T-cell (primary cell): ENCODE measurements at regions of chr2 and their contacts with region 1.

Region 1: DNA sequence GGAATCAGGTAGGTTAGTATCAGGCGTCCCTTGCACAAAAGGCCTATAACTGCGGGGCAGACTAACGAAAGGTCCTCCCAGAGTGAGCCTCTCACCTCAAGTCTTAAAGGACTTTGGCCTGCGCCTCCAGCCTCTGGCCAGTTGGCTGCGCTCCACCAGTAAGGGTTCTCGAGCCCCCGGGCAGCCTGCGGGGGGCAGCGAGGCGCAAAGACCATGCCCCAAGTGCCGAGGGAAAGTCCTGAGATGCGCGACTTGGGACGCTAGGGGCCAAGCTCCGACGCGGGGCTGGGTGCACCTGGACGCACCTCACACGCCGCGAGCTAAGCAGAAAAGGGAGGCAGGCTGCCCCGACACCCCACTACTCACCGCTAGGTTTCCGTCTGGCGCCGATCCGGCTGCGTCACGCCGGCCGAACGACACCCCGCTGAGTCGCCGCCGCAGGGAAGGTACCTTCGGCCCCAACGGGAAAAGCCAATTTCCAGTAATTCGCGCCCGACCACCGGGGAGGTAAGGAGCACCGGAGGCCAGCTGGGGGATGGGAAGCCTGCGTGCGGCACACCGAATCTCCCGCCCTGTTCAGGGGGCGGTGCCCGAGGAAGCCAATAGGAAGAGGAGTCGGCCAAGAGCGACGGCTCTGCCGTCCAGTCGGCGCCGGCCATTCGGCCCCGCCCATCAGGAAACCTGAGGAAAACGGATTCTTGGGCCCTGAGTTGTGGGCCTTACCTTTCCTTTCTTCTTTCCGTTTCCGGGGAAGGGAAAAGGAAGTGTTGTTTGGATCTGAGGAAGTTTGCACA is at the start of gene ORC2:
- DNase-seq: peak; percentile 78 to 95 (median 90)
- ATAC-seq: peak; percentile 95 to 97 (median 96)
- H3K4me3 ChIP-seq: peak within 1 kb of the TSS; percentile 72 to 92
- H3K4me3 Mint-ChIP-seq: peak within 1 kb of the TSS; percentile 97 to 99 (median 98)
- H3K27ac ChIP-seq: peak within 1 kb of the TSS; percentile 78
- H3K27ac Mint-ChIP-seq: peak within 1 kb of the TSS; percentile 98 to 100
- H3K4me1 ChIP-seq: peaks cover 19 to 21% of the 10 kb centered on the region in 2 experiments
- H3K4me1 Mint-ChIP-seq: peaks cover 70 to 74% (median 71%) of the 10 kb centered on the region in 3 donors
- H3K27me3 ChIP-seq: no peaks in the 10 kb centered on the region
- H3K27me3 Mint-ChIP-seq: no peaks in the 10 kb centered on the region
- total RNA-seq, gene ORC2: 29.9 to 52.4 (median 50.6) TPM

Region 2: GRCh38 chr2:200578778-200579177 is 384.5 kb before region 1 on chr2:
- CTCF ChIA-PET with region 1: no interaction called
- POLR2A ChIA-PET with region 1: no interaction called
- DNase-seq: peak in 1 of 35 experiments; percentile 41
- ATAC-seq: no peak
- H3K4me3 ChIP-seq: no peak overlapping the region
- H3K4me3 Mint-ChIP-seq: no peak overlapping the region
- H3K27ac ChIP-seq: no peak overlapping the region
- H3K27ac Mint-ChIP-seq: no peak overlapping the region
- H3K4me1 ChIP-seq: no peaks in the 10 kb centered on the region
- H3K4me1 Mint-ChIP-seq: peaks cover 0 to 9% (median 0%) of the 10 kb centered on the region in 3 donors
- H3K27me3 ChIP-seq: no peaks in the 10 kb centered on the region
- H3K27me3 Mint-ChIP-seq: no peaks in the 10 kb centered on the region

Region 3: GRCh38 chr2:200615247-200615646 is 348.1 kb before region 1 on chr2:
- CTCF ChIA-PET with region 1: no interaction called
- POLR2A ChIA-PET with region 1: no interaction called
- DNase-seq: no peak
- ATAC-seq: no peak
- H3K4me3 ChIP-seq: no peak overlapping the region
- H3K4me3 Mint-ChIP-seq: no peak overlapping the region
- H3K27ac ChIP-seq: no peak overlapping the region
- H3K27ac Mint-ChIP-seq: no peak overlapping the region
- H3K4me1 ChIP-seq: no peaks in the 10 kb centered on the region
- H3K4me1 Mint-ChIP-seq: peaks cover 0 to 26% (median 11%) of the 10 kb centered on the region in 3 donors
- H3K27me3 ChIP-seq: peaks cover 0 to 2% of the 10 kb centered on the region in 2 experiments
- H3K27me3 Mint-ChIP-seq: peaks cover 0 to 26% of the 10 kb centered on the region in 2 donors

Region 4: DNA sequence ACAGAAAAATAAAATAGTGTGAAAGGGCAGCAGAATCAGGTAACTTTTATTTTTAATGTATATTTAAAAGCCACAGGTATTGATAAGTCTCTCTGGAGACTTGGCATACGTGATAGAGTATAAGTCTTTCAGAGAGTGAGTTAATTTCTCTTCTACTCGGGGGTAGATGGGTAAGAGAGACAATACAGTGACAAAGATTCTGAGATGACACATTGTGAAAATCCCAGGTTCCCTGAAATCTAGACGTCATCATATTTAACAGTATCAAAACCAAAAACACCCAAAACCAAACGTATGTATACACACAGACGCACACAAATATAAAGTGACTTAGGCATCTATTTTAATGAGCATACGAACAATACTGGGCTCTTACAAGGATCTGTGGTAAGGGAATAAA is 40.9 kb before region 1 on chr2:
- CTCF ChIA-PET with region 1: no interaction called
- POLR2A ChIA-PET with region 1: no interaction called
- DNase-seq: no peak
- ATAC-seq: no peak
- H3K4me3 ChIP-seq: no peak overlapping the region
- H3K4me3 Mint-ChIP-seq: no peak overlapping the region
- H3K27ac ChIP-seq: no peak overlapping the region
- H3K27ac Mint-ChIP-seq: peak overlapping the region; percentile 35 to 70
- H3K4me1 ChIP-seq: no peaks in the 10 kb centered on the region
- H3K4me1 Mint-ChIP-seq: no peaks in the 10 kb centered on the region
- H3K27me3 ChIP-seq: no peaks in the 10 kb centered on the region
- H3K27me3 Mint-ChIP-seq: no peaks in the 10 kb centered on the region

Region 5: DNA sequence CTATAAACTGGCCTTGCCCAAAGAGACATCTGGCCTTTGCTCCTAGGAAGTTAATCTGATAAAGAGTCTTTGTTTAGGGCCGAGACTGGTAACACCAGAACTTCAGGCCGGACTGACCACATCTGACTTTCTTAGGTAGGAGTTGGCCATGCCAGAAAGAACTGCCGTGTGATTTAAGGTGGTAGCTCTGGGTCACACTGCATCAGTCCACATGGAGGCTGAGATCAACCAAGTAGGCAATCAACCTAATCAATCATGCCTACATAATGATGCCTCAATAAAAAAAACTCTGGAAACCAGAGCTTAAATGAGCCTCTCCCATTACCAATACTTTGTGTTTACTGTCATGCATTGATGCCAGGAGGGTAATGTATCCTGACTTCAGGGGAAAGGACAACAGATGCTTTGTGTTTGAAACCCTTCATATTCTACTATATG is 44.3 kb after region 1 on chr2:
- CTCF ChIA-PET with region 1: no interaction called
- POLR2A ChIA-PET with region 1: no interaction called
- DNase-seq: no peak
- ATAC-seq: no peak
- H3K4me3 ChIP-seq: no peak overlapping the region
- H3K4me3 Mint-ChIP-seq: no peak overlapping the region
- H3K27ac ChIP-seq: no peak overlapping the region
- H3K27ac Mint-ChIP-seq: no peak overlapping the region
- H3K4me1 ChIP-seq: no peaks in the 10 kb centered on the region
- H3K4me1 Mint-ChIP-seq: no peaks in the 10 kb centered on the region
- H3K27me3 ChIP-seq: no peaks in the 10 kb centered on the region
- H3K27me3 Mint-ChIP-seq: no peaks in the 10 kb centered on the region

Region 6: GRCh38 chr2:201130524-201131186 is 167.3 kb after region 1 on chr2:
- CTCF ChIA-PET with region 1: no interaction called
- POLR2A ChIA-PET with region 1: interaction called, 3 to 10 read pairs
- DNase-seq: peak in 13 of 35 experiments; percentile 8 to 68 (median 34)
- ATAC-seq: peak; percentile 68 to 74 (median 72)
- H3K4me3 ChIP-seq: peak overlapping the region in 1 of 2 donors; percentile 8
- H3K4me3 Mint-ChIP-seq: peak overlapping the region; percentile 54 to 73 (median 71)
- H3K27ac ChIP-seq: peak overlapping the region; percentile 97
- H3K27ac Mint-ChIP-seq: peak overlapping the region; percentile 99 to 100
- H3K4me1 ChIP-seq: peaks cover 60 to 71% of the 10 kb centered on the region in 2 experiments
- H3K4me1 Mint-ChIP-seq: peaks cover 76 to 80% (median 77%) of the 10 kb centered on the region in 3 donors
- H3K27me3 ChIP-seq: no peaks in the 10 kb centered on the region
- H3K27me3 Mint-ChIP-seq: no peaks in the 10 kb centered on the region

Region 7: GRCh38 chr2:201158111-201158929 is 195.0 kb after region 1 on chr2:
- CTCF ChIA-PET with region 1: interaction called, 3 to 20 read pairs
- POLR2A ChIA-PET with region 1: no interaction called
- DNase-seq: peak in 34 of 35 experiments; percentile 25 to 81 (median 58)
- ATAC-seq: peak; percentile 84 to 95 (median 86)
- H3K4me3 ChIP-seq: no peak overlapping the region
- H3K4me3 Mint-ChIP-seq: no peak overlapping the region
- H3K27ac ChIP-seq: peak overlapping the region; percentile 71
- H3K27ac Mint-ChIP-seq: peak overlapping the region; percentile 85 to 88
- H3K4me1 ChIP-seq: peaks cover 0 to 12% of the 10 kb centered on the region in 2 experiments
- H3K4me1 Mint-ChIP-seq: peaks cover 17 to 30% (median 18%) of the 10 kb centered on the region in 3 donors
- H3K27me3 ChIP-seq: no peaks in the 10 kb centered on the region
- H3K27me3 Mint-ChIP-seq: no peaks in the 10 kb centered on the region